ENCODE measurements at regions of chrX and their contacts with region 1.

Region 1: GRCh38 chrX:21756785-21757529 is 959 bp downstream of the SMPX start:
- DNase-seq: no peak
- ATAC-seq: peak; percentile 79 to 89

Region 2: GRCh38 chrX:21153503-21153902 is 603.5 kb before region 1 on chrX:
- intact Hi-C with region 1: no loop called
- DNase-seq: no peak
- ATAC-seq: peak; percentile 84 to 95

Region 3: DNA sequence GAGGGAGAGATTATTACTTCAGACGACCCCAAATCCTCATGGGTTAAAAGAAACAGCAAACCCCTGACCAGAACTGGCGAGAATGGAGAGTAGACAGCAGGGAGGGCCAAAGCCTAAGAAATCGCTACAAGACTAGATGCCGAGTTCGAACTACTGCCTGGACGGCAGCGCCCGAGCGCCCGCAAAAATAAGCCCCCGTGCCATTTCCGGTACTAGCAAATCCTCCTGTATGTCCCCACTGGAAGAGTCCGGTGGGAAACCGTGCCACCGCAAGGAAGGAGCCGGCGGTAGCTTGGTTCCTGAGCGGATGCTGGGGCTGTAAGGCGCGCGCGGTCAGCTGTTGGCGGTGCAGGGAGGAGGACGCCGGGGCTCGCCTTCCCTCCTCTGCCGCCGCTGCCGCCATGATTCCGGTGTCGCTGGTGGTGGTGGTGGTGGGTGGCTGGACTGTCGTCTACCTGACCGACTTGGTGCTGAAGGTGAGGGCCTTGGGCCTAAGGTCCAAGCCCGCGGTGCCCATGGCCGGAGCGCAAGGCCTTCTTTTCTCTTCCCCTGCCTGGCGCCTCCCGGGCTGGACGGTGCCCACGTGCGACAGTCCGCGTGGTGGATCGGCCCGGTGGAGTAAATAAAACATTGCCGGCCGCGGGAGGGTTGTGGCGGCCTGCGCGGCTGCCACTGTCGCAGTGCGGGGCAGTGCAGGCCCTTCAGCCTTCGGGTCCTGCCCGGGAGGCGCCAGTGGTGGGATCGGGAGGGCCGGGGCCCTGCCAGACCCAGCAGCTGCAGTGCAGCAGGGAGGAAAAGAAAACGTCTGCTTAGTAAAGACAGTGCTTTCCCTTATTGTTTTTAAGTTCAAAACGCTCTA is 82.6 kb after region 1 on chrX and contains the start of gene MBTPS2:
- intact Hi-C with region 1: loop called in 1 of 2 experiments (anchors 5 kb)
- DNase-seq: peak; percentile 81
- ATAC-seq: peak; percentile 92 to 97
- total RNA-seq, gene MBTPS2: 8.8 to 12.5 TPM